ENCODE measurements at regions of chr1 and their contacts with region 1.

Region 1: GRCh38 chr1:2586154-2587070 is at the start of gene PRXL2B:
- DNase-seq: peak; percentile 99
- ATAC-seq: peak; percentile 94
- total RNA-seq, gene PRXL2B: 12.2 TPM

Region 2: GRCh38 chr1:2642560-2643413 is 56.4 kb after region 1 on chr1:
- intact Hi-C with region 1: loop called (anchors 2 kb)
- DNase-seq: peak; percentile 91
- ATAC-seq: peak; percentile 86

Region 3: DNA sequence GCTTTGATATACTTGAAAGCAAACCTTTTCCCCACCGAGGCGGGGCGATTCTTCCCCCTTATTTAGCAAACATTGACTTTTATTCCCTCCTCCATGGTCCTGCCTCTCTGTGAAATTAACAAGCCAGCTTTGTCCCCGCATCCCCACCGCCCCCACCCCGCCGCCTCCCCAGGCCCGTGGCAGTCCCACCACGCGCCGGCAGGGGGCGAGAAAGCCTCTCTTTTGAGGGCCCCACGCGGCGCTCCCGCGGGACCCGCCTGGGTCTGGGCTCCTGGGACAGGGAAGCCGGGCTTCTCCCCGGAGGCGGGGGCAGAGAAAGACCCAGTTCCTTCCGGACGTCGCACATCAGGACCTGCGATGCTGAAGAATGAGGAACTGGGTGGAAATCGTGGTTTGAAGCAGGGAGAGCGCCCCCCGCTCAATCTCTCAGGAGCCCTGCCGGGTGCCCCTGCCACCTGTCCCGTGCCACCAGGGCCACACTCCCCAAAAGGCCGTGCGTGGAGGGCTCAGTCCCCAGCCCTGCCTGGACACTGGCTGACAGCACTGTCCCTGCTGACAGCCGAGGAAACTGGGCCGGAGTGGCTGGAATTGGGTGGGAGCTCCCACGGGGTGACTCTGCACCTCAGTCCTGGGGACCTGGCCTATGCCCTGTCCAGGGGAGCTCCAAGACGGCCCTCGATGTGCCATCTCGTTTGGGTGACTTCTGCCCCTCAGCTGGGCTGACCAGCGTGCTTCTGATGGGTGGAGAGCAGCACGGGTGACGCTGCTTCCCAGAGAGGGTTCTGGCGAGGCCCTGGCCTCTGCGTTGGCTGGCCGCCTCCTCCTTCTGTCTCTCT is 426.3 kb after region 1 on chr1:
- intact Hi-C with region 1: no loop called
- DNase-seq: peak; percentile 79
- ATAC-seq: peak; percentile 78